ENCODE measurements at regions of chr13 and their contacts with region 1.

Region 1: GRCh38 chr13:77697217-77698103 is at the start of gene SLAIN1:
- DNase-seq: peak; percentile 82 to 97 (median 94)

Region 2: GRCh38 chr13:77250975-77251374 is 446.5 kb before region 1 on chr13:
- intact Hi-C with region 1: no loop called
- DNase-seq: no peak

Region 3: GRCh38 chr13:77637588-77637987 is 59.9 kb before region 1 on chr13:
- intact Hi-C with region 1: loop called (anchors 10 kb)
- DNase-seq: peak in 2 of 42 donors; percentile 26 to 48

Region 4: DNA sequence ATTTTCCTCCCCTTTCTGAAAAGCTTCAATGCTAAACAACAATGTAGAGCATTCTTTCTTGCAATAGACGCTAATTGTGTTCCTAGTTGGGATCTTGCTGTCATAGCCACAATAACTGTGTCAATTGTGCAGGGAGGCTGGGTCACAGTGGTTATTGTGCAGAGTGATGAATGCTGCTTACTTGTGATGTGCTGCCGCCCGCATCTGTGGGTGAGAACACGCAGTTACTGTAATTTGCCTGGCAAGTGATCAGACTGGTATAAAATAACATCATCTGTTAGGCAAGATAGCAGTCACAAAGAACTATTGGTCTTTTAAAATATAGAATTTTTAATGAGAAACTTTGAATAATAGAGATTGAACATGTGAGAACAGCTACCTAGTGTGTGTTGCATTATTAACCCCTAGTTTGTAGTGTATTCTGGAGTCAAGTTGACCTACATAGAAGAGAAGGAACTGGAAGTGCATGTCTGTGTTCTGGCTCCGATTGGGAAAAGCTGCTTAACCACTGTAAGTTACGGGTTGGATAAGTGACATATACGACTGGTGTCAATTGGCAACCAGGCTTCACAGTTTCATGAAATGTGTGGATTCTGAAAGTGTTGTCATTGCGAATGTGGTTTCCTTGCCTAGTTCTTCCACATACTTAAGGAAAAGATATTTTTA is 43.6 kb after region 1 on chr13:
- intact Hi-C with region 1: loop called (anchors 2 kb)
- DNase-seq: peak; percentile 64 to 95 (median 84)

Measured in head of caudate nucleus (tissue), 42 donors.